ENCODE measurements at regions of chr9 and their contacts with region 1.

Region 1: DNA sequence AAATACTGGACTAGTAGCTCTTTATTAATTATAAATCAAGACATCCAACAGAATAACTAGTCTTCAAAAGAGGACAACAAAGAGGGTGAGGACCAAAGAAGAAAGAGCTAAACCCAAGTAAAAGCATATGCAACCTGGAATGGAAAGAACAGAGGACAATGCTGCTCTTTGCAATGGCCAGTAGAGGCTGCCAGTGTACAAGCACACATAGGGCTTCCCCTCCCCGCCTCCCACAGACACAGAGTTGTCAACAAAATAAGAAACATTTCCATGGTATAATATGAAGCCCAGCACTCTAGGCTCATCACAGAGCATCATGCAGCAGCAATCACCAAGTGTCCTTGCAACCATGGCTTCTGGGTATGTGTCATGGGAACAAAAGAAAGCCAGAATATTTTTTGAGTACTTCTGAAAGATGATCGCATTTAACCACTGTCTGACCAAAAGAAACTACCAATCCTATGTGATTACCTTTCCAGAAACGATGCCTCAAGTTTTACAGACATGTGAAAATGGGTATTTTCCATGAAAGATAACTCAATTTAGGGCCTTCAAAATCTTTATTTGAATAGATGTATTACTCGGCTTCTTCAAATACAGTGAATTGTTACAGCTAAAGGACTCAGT is 58.1 kb downstream of the RFX3 start:
- DNase-seq: peak; percentile 86
- H3K4me3 Mint-ChIP-seq: no peak overlapping the region
- H3K27ac Mint-ChIP-seq: no peak overlapping the region
- H3K4me1 Mint-ChIP-seq: peaks cover 4% of the 10 kb centered on the region
- H3K27me3 Mint-ChIP-seq: no peaks in the 10 kb centered on the region

Region 2: GRCh38 chr9:3398232-3398648 is 69.5 kb before region 1 on chr9:
- intact Hi-C with region 1: no loop called
- DNase-seq: peak; percentile 60
- H3K4me3 Mint-ChIP-seq: peak overlapping the region; percentile 48
- H3K27ac Mint-ChIP-seq: peak overlapping the region; percentile 48
- H3K4me1 Mint-ChIP-seq: peaks cover 13% of the 10 kb centered on the region
- H3K27me3 Mint-ChIP-seq: no peaks in the 10 kb centered on the region

Region 3: GRCh38 chr9:3516667-3517330 is 49.1 kb after region 1 on chr9:
- intact Hi-C with region 1: no loop called
- DNase-seq: no peak
- H3K4me3 Mint-ChIP-seq: no peak overlapping the region
- H3K27ac Mint-ChIP-seq: no peak overlapping the region
- H3K4me1 Mint-ChIP-seq: peaks cover 13% of the 10 kb centered on the region
- H3K27me3 Mint-ChIP-seq: no peaks in the 10 kb centered on the region

Region 4: GRCh38 chr9:3650994-3651622 is 183.4 kb after region 1 on chr9:
- intact Hi-C with region 1: loop called (anchors 5 kb)
- DNase-seq: no peak
- H3K4me3 Mint-ChIP-seq: no peak overlapping the region
- H3K27ac Mint-ChIP-seq: no peak overlapping the region
- H3K4me1 Mint-ChIP-seq: peaks cover 2% of the 10 kb centered on the region
- H3K27me3 Mint-ChIP-seq: peaks cover 2% of the 10 kb centered on the region

Measured in activated CD4-positive, alpha-beta T cell treated with anti-CD3 and anti-CD28 coated beads, Interleukin-2, amount 10 ng/mL, durations not matched to agents 24 days and 14 days (primary cell).